CD8-positive, alpha-beta T cell (primary cell): ENCODE measurements at regions of chr16 and their contacts with region 1.

Region 1: GRCh38 chr16:3129137-3130131 is 5.4 kb upstream of the ZNF213 start:
- DNase-seq: peak; percentile 56 to 94 (median 82)
- ATAC-seq: peak; percentile 73
- H3K4me3 ChIP-seq: peak overlapping the region; percentile 71 to 75
- H3K4me3 Mint-ChIP-seq: peak overlapping the region; percentile 93
- H3K27ac ChIP-seq: peak overlapping the region; percentile 41 to 65
- H3K27ac Mint-ChIP-seq: peak overlapping the region; percentile 92
- H3K4me1 ChIP-seq: peaks cover 36% of the 10 kb centered on the region
- H3K4me1 Mint-ChIP-seq: peaks cover 62% of the 10 kb centered on the region
- H3K27me3 ChIP-seq: no peaks in the 10 kb centered on the region
- H3K27me3 Mint-ChIP-seq: no peaks in the 10 kb centered on the region
- CTCF ChIP-seq: peak; percentile 86

Region 2: GRCh38 chr16:3045357-3045728 is 84.1 kb before region 1 on chr16:
- CTCF ChIA-PET with region 1: interaction called, 14 read pairs
- POLR2A ChIA-PET with region 1: interaction called, 7 read pairs
- intact Hi-C with region 1: no loop called
- DNase-seq: peak in 5 of 9 experiments; percentile 38 to 56 (median 49)
- ATAC-seq: peak; percentile 69
- H3K4me3 ChIP-seq: peak overlapping the region; percentile 31 to 55
- H3K4me3 Mint-ChIP-seq: peak overlapping the region; percentile 80
- H3K27ac ChIP-seq: no peak overlapping the region
- H3K27ac Mint-ChIP-seq: peak overlapping the region; percentile 22
- H3K4me1 ChIP-seq: peaks cover 20% of the 10 kb centered on the region
- H3K4me1 Mint-ChIP-seq: peaks cover 20% of the 10 kb centered on the region
- H3K27me3 ChIP-seq: peaks cover 26 to 46% of the 10 kb centered on the region in 2 experiments
- H3K27me3 Mint-ChIP-seq: peaks cover 26% of the 10 kb centered on the region
- CTCF ChIP-seq: no peak

Region 3: DNA sequence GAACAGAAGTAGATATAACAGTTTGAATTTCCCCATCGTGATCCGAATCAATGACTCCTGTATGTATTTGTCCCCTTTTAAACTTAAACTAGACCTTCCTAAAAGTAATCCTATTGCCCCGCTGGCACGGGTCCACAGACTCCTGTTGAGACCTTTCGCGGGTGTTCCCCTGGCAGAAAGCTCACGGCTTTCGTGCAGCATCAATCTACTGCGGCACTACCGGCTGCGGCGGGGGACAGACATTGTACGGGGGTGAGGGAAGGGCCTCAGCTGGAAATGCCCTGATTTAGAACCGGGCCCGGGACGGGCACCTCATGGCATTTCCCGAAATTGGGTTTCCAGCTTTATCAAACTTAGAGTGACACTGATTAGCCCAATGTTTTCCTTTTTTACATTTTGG is 49.4 kb before region 1 on chr16:
- CTCF ChIA-PET with region 1: interaction called, 42 read pairs
- POLR2A ChIA-PET with region 1: interaction called, 30 read pairs
- intact Hi-C with region 1: no loop called
- DNase-seq: no peak
- ATAC-seq: no peak
- H3K4me3 ChIP-seq: no peak overlapping the region
- H3K4me3 Mint-ChIP-seq: no peak overlapping the region
- H3K27ac ChIP-seq: no peak overlapping the region
- H3K27ac Mint-ChIP-seq: no peak overlapping the region
- H3K4me1 ChIP-seq: peaks cover 51% of the 10 kb centered on the region
- H3K4me1 Mint-ChIP-seq: peaks cover 63% of the 10 kb centered on the region
- H3K27me3 ChIP-seq: no peaks in the 10 kb centered on the region
- H3K27me3 Mint-ChIP-seq: no peaks in the 10 kb centered on the region
- CTCF ChIP-seq: no peak

Region 4: DNA sequence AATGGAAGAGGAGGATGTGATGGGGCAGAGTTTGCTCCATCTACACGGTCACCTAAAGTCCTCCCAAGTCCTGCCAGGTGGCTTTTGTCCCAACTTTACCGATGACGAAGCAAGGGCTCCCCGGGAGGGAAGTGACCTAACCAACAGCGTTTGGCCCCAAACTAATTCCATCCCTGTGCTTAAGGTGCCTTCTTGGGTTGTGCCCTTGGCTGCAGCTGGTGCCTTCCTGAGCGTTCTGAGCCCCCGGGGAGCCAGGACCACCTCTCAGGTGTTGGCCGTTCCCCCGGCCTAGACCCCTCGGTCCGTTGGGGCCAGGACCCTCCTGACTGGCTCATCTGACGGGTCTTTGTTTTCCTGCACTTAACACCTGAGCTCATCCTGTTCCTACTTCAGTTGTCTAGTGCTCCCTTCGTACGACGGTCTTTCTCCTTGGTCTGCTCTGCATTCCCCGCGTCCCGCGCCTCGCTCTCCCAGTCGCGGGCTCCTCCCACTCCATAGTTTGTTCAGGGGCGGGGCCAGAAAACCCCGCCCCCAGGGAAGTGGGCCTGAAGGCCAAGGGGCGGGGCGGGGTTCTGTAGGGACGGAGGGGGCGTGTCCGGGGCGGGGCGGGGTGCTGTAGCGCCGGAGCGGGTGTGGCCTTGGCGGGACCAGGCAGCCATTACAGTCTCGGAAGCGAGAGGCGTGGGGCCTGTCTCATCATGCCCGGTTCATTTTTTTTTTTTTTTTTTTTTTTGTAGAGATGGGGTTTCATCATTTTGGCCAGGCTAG is 29.5 kb before region 1 on chr16:
- CTCF ChIA-PET with region 1: interaction called, 256 read pairs
- POLR2A ChIA-PET with region 1: interaction called, 13 read pairs
- intact Hi-C with region 1: loop called (anchors 1 kb)
- DNase-seq: peak; percentile 65 to 94 (median 88)
- ATAC-seq: peak; percentile 89
- H3K4me3 ChIP-seq: peak overlapping the region; percentile 9 to 38
- H3K4me3 Mint-ChIP-seq: peak overlapping the region; percentile 75
- H3K27ac ChIP-seq: peak overlapping the region in 1 of 2 experiments; percentile 70
- H3K27ac Mint-ChIP-seq: peak overlapping the region; percentile 82
- H3K4me1 ChIP-seq: peaks cover 38% of the 10 kb centered on the region
- H3K4me1 Mint-ChIP-seq: peaks cover 46% of the 10 kb centered on the region
- H3K27me3 ChIP-seq: no peaks in the 10 kb centered on the region
- H3K27me3 Mint-ChIP-seq: no peaks in the 10 kb centered on the region
- CTCF ChIP-seq: no peak

Region 5: DNA sequence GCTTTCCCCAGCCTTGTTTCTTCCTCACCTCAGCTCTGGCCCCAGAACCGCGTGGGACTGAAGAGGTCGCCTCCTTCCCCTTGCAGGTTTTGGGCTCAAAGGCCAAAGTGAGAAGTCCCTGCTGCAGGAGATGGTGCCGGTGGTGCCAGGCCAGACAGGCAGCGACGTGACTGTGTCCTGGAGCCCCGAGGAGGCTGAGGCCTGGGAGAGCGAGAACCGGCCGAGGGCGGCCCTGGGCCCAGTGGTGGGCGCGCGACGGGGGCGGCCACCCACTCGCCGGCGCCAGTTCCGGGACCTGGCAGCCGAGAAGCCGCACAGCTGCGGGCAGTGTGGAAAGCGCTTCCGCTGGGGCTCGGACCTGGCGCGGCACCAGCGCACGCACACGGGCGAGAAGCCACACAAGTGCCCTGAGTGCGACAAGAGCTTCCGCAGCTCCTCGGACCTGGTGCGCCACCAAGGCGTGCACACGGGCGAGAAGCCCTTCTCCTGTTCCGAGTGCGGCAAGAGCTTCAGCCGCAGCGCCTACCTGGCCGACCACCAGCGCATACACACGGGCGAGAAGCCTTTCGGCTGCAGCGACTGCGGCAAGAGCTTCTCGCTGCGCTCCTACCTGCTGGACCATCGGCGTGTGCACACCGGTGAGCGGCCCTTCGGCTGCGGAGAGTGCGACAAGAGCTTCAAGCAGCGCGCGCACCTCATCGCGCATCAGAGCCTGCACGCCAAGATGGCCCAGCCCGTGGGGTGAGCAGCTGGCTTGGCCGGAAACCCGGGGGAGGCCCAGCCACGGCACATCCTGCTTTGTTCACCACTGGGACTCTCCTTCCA is 11.4 kb after region 1 on chr16:
- CTCF ChIA-PET with region 1: interaction called, 18 read pairs
- POLR2A ChIA-PET with region 1: interaction called, 14 read pairs
- intact Hi-C with region 1: no loop called
- DNase-seq: peak in 1 of 9 experiments; percentile 9
- ATAC-seq: no peak
- H3K4me3 ChIP-seq: no peak overlapping the region
- H3K4me3 Mint-ChIP-seq: no peak overlapping the region
- H3K27ac ChIP-seq: no peak overlapping the region
- H3K27ac Mint-ChIP-seq: no peak overlapping the region
- H3K4me1 ChIP-seq: peaks cover 4% of the 10 kb centered on the region
- H3K4me1 Mint-ChIP-seq: peaks cover 5% of the 10 kb centered on the region
- H3K27me3 ChIP-seq: no peaks in the 10 kb centered on the region
- H3K27me3 Mint-ChIP-seq: no peaks in the 10 kb centered on the region
- CTCF ChIP-seq: no peak

Region 6: DNA sequence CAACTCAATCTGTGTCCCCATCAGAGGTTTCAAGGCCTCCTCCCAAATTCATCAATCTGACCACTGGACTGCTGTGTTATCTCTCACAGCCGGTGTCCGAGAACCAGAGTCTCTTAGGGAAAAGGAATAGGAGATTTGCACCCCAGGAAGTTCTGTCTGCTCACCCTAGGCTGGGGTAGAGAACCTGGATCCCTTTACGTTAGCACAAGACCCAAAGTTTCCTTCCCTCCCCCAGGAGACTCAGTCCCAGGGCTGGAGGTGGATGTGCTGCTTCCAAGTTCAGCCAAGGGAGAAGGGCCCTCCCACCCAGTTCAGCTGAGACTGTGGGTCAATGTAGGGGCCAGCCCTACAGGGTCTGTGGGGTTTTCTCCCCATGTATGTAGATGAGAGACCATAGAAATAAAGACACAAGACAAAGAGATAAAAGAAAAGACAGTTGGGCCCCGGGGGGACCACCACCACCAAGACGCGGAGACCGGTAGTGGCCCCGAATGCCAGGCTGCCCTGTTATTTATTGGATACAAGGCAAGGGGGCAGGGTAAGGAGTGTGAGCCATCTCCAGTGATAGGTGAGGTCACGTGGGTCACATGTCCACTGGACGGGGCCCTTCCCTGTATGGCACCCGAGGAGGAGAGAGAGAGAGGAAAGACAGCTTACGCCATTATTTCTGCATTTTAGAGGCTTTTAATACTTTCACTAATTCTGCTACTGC is 35.8 kb after region 1 on chr16:
- CTCF ChIA-PET with region 1: interaction called, 63 read pairs
- POLR2A ChIA-PET with region 1: interaction called, 3 read pairs
- intact Hi-C with region 1: loop called in 1 of 2 experiments (anchors 1 kb)
- DNase-seq: no peak
- ATAC-seq: peak; percentile 16
- H3K4me3 ChIP-seq: peak overlapping the region in 1 of 2 experiments; percentile 31
- H3K4me3 Mint-ChIP-seq: peak overlapping the region; percentile 42
- H3K27ac ChIP-seq: peak overlapping the region in 1 of 2 experiments; percentile 36
- H3K27ac Mint-ChIP-seq: peak overlapping the region; percentile 58
- H3K4me1 ChIP-seq: peaks cover 7% of the 10 kb centered on the region
- H3K4me1 Mint-ChIP-seq: peaks cover 11% of the 10 kb centered on the region
- H3K27me3 ChIP-seq: peaks cover 0 to 2% of the 10 kb centered on the region in 2 experiments
- H3K27me3 Mint-ChIP-seq: no peaks in the 10 kb centered on the region
- CTCF ChIP-seq: no peak